A673 (cell line): ENCODE measurements at regions of chr4 and their contacts with region 1.

Region 1: DNA sequence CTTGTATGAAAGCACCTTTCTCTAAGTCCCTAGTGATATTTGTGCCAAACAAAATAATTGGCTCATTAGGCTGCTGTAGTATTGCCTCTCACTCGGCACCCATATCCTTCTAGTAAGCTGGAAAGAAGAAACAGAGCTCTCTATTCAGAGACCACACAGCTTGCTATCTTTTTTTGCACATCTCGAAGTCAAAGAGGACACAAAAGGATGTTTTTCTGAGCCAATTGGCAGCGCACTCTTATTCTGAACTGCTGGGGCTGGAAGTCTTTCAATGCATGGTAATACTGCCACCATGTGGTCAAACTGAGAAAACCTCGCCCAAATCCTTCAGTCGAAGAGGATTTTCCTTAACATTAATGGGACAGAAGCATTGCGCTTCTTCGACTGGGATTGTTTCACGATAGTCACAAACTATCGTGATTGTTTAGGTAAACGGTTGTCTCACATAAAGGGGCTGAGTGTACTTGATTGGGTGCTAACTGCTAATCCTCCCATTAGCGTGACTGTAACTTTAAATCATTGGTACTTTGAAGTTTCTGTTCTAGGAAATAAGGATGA is 572.0 kb upstream of the LCORL start:
- DNase-seq: peak; percentile 83
- H3K4me3 ChIP-seq: no peak overlapping the region
- H3K27ac ChIP-seq: no peak overlapping the region
- H3K4me1 ChIP-seq: no peaks in the 10 kb centered on the region
- H3K27me3 ChIP-seq: no peaks in the 10 kb centered on the region
- CTCF ChIP-seq: peak; percentile 83

Region 2: DNA sequence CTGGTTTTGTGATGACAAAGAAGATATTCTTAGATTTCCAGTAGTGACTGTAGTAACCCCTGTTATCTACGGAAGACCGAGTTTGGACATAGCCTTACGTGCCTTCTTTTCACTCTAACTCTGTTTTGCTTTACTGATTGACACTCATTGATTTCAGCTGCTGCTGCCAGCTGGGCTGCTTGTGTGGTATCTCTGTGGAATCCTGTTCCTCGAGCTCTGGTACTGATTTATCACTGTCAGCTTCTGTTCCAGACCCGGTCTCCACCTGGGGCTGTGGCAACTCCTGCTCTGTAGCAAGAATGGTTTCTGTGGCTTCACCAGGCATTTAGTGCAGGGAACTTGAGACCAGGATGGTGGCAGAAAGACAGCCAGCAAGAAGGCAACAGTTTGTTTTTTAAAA is 1041.1 kb before region 1 on chr4:
- CTCF ChIA-PET with region 1: no interaction called
- POLR2A ChIA-PET with region 1: interaction called, 5 read pairs
- intact Hi-C with region 1: loop called (anchors 2 kb)
- DNase-seq: no peak
- H3K4me3 ChIP-seq: no peak overlapping the region
- H3K27ac ChIP-seq: no peak overlapping the region
- H3K4me1 ChIP-seq: no peaks in the 10 kb centered on the region
- H3K27me3 ChIP-seq: no peaks in the 10 kb centered on the region
- CTCF ChIP-seq: no peak

Region 3: GRCh38 chr4:17817020-17817419 is 776.5 kb before region 1 on chr4:
- CTCF ChIA-PET with region 1: no interaction called
- POLR2A ChIA-PET with region 1: no interaction called
- intact Hi-C with region 1: loop called (anchors 5 kb)
- DNase-seq: peak; percentile 65
- H3K4me3 ChIP-seq: no peak overlapping the region
- H3K27ac ChIP-seq: no peak overlapping the region
- H3K4me1 ChIP-seq: peaks cover 16% of the 10 kb centered on the region
- H3K27me3 ChIP-seq: no peaks in the 10 kb centered on the region
- CTCF ChIP-seq: peak; percentile 60

Region 4: DNA sequence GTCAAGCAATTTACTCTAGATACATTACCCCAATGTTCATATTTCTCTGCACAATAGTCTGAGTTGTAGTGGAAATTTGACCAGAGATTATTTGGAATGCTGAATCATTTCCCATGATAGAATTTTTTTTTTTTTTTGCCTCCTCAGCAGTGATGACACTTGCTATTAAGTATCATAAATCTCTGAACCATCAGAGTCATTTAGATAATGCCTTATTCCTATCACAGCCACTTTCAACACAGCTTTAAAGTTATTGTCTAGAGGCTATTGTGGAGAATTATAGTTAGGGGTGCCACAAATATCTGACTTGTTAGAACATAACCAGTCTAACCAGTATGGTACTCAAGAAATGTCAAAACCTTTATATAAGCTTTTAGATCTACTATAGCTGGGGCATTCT is 651.8 kb before region 1 on chr4:
- CTCF ChIA-PET with region 1: no interaction called
- POLR2A ChIA-PET with region 1: no interaction called
- intact Hi-C with region 1: loop called (anchors 10 kb)
- DNase-seq: no peak
- H3K4me3 ChIP-seq: no peak overlapping the region
- H3K27ac ChIP-seq: no peak overlapping the region
- H3K4me1 ChIP-seq: peaks cover 8% of the 10 kb centered on the region
- H3K27me3 ChIP-seq: no peaks in the 10 kb centered on the region
- CTCF ChIP-seq: no peak

Region 5: GRCh38 chr4:18366892-18367291 is 226.6 kb before region 1 on chr4:
- CTCF ChIA-PET with region 1: no interaction called
- POLR2A ChIA-PET with region 1: no interaction called
- intact Hi-C with region 1: loop called (anchors 5 kb)
- DNase-seq: peak; percentile 46
- H3K4me3 ChIP-seq: no peak overlapping the region
- H3K27ac ChIP-seq: no peak overlapping the region
- H3K4me1 ChIP-seq: no peaks in the 10 kb centered on the region
- H3K27me3 ChIP-seq: no peaks in the 10 kb centered on the region
- CTCF ChIP-seq: peak; percentile 67